RWPE1 (cell line): ENCODE measurements at regions of chr4 and their contacts with region 1.

Region 1: GRCh38 chr4:6955261-6955911 is 45.8 kb downstream of the TBC1D14 start:
- DNase-seq: peak; percentile 23
- H3K27ac ChIP-seq: no peak overlapping the region
- CTCF ChIP-seq: no peak

Region 2: GRCh38 chr4:6974138-6974848 is 18.9 kb after region 1 on chr4:
- CTCF ChIA-PET with region 1: interaction called, 11 read pairs
- POLR2A ChIA-PET with region 1: no interaction called
- DNase-seq: peak; percentile 70
- H3K27ac ChIP-seq: no peak overlapping the region
- CTCF ChIP-seq: peak; percentile 94